Common myeloid progenitor, CD34-positive (primary cell): ENCODE measurements at regions of chr3 and their contacts with region 1.

Region 1: GRCh38 chr3:152183473-152183872 is 85.3 kb upstream of the MBNL1 start:
- DNase-seq: peak; percentile 78 to 81 (median 78)
- H3K4me3 ChIP-seq: peak overlapping the region in 1 of 7 experiments; percentile 38
- H3K27ac ChIP-seq: no peak overlapping the region
- H3K4me1 ChIP-seq: peaks cover 0 to 25% (median 13%) of the 10 kb centered on the region in 4 experiments
- H3K27me3 ChIP-seq: no peaks in the 10 kb centered on the region

Region 2: GRCh38 chr3:152147748-152148147 is 35.7 kb before region 1 on chr3:
- CTCF ChIA-PET with region 1: no interaction called
- POLR2A ChIA-PET with region 1: no interaction called
- DNase-seq: no peak
- H3K4me3 ChIP-seq: no peak overlapping the region
- H3K27ac ChIP-seq: no peak overlapping the region
- H3K4me1 ChIP-seq: no peaks in the 10 kb centered on the region
- H3K27me3 ChIP-seq: no peaks in the 10 kb centered on the region

Region 3: DNA sequence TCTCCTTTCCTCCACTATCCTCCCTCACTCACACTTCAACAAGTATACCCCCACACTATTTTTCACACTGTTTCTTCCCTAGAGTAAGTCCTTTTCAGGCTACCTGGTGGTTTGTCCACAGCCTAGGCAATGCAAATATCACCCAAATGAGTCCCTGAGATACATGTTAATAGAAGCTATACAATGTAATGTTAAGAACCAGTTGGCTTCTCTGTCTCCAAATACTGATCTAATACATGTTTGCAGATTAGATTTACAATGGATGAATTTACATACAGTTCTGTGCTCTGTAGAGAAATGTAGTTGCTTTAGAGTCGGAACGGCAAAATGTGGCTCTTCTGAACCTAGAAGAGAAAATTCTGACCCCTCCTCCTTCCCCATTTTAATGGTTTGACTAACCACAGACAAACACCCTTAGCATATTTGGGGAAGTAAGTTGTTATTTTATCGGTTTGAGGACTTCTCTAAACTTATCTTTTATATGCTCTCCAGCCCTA is 21.7 kb after region 1 on chr3:
- CTCF ChIA-PET with region 1: interaction called, 13 read pairs
- POLR2A ChIA-PET with region 1: no interaction called
- DNase-seq: peak; percentile 88 to 97 (median 96)
- H3K4me3 ChIP-seq: peak overlapping the region in 6 of 7 experiments; percentile 68 to 98 (median 84)
- H3K27ac ChIP-seq: peak overlapping the region; percentile 89 to 93
- H3K4me1 ChIP-seq: peaks cover 24 to 56% (median 48%) of the 10 kb centered on the region in 4 experiments
- H3K27me3 ChIP-seq: no peaks in the 10 kb centered on the region

Region 4: DNA sequence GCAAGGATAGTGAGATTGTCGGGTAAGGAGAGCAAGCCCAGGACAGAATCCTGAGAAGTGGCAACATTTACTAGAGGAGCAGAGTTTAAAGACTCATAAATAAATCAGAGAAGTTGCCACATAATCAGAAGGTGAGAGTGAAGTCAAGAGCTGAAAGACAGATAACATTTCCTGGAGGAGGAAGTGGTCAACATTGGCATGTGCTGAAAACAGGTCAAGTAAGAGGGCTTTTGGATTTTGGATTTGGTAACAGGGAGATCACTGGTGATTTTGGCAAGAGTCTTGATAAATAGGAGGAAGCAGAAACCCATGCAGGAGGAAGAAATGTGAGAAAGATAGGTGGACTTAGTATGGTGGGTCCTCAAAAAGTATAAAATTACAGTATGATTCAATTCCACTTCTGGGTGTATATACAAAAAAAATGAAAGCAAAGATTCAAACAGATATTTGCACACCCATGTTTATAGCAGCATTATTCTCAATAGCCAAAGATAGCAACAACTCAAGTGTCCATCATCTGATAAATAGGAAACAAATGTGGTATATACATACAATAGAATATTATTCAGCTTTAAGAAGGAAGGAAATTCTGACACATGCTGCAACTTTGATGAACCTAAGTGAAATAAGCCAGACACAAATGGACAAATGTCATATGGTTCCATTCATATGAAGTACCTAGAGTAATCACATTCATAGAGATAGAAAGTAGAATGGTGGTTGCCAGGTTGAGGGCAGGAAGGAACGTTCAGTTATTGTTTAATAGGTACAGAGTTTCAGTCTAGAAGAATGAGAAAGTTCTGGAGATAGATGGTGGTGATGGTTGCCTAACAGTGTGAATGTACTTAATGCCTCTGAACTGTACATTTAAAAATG is 57.9 kb after region 1 on chr3:
- CTCF ChIA-PET with region 1: interaction called, 33 read pairs
- POLR2A ChIA-PET with region 1: no interaction called
- DNase-seq: peak in 2 of 3 donors; percentile 51 to 64
- H3K4me3 ChIP-seq: peak overlapping the region in 2 of 7 experiments; percentile 5 to 25
- H3K27ac ChIP-seq: peak overlapping the region in 1 of 2 experiments; percentile 94
- H3K4me1 ChIP-seq: peaks cover 18 to 50% (median 47%) of the 10 kb centered on the region in 4 experiments
- H3K27me3 ChIP-seq: no peaks in the 10 kb centered on the region

Region 5: GRCh38 chr3:152309535-152310307 is 126.2 kb after region 1 on chr3:
- CTCF ChIA-PET with region 1: interaction called, 13 read pairs
- POLR2A ChIA-PET with region 1: no interaction called
- DNase-seq: no peak
- H3K4me3 ChIP-seq: no peak overlapping the region
- H3K27ac ChIP-seq: peak overlapping the region in 1 of 2 experiments; percentile 59
- H3K4me1 ChIP-seq: peaks cover 0 to 16% (median 4%) of the 10 kb centered on the region in 4 experiments
- H3K27me3 ChIP-seq: no peaks in the 10 kb centered on the region

Region 6: GRCh38 chr3:152444029-152444641 is 260.7 kb after region 1 on chr3:
- CTCF ChIA-PET with region 1: interaction called, 16 read pairs
- POLR2A ChIA-PET with region 1: no interaction called
- DNase-seq: peak; percentile 69 to 80 (median 79)
- H3K4me3 ChIP-seq: no peak overlapping the region
- H3K27ac ChIP-seq: no peak overlapping the region
- H3K4me1 ChIP-seq: peaks cover 6 to 29% (median 12%) of the 10 kb centered on the region in 4 experiments
- H3K27me3 ChIP-seq: no peaks in the 10 kb centered on the region